ENCODE measurements at regions of chr7 and their contacts with region 1.

Region 1: DNA sequence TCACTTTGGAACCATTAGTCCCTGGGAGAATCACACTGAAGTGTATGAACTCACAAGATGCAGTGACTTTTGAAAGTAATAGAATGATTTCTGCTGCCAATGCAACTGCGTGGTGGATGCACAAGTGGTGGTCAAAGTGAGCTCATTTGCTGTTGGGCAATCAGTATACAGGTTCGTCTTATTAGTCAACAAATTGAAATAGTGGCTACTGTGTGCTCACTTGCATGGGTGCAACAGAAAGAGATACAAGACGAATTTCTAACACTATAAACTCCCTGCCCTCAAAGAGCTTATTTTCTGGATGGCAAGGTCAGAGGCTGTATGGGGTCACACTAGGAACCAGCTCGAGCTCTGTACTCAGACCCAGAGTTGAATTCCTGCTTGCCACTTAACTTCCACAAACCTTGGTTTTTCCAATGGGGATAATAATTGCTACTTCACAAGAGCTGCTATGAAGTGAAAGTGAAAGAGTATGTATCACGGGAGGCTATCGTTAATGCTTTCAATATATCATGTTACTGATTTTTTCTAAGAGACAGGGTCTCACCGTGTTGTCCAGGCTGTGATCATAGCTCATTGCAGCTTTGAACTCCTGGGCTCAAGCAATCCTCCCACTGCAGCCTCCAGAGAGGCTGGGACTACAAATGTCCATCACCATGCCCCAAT is 8.3 kb upstream of the BCL7B start:
- DNase-seq: no peak
- H3K4me3 ChIP-seq: no peak overlapping the region
- CTCF ChIP-seq: no peak

Region 2: DNA sequence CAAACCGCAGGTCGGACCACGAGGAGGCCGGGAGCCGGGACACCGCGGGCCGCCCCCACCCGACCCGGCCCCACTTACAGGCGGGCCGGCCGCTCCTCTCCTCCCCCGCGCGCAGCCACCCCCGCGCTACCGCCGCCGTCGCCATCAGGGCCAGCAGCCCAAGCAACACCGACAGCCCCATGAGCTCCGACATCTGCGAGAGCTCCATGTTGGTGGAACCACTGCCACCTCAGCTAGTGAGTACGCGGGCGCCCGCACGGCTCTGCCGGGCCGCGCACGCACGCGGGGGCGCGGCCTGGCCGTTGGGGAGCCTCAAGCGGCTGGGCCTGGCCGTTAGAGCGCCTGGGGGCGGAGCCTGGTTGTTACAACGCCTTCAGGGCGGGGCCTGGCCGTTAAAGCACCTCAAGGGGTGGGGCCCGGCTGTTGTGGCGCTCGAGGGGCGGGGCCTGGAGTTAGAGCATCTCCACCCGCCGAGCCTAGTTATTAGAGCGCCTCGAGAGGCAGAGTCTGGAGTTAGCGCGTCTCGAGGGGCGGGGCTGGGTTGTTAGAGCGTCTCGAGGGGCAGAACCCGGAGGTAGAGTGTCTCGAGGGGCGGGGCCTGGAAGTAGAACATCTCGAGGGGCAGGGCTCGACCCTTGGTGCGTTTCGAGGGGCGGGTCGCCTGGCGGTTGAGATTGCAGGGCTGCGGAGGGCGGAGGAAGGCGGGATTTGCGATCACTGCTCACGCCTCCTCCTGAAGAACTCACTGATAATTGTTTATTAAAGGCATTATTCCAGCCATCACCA is 12.7 kb after region 1 on chr7 and contains the start of gene TBL2:
- CTCF ChIA-PET with region 1: interaction called, 14 read pairs
- POLR2A ChIA-PET with region 1: interaction called, 9 read pairs
- DNase-seq: peak; percentile 77
- H3K4me3 ChIP-seq: peak within 1 kb of the TSS; percentile 91
- CTCF ChIP-seq: peak; percentile 30

Region 3: DNA sequence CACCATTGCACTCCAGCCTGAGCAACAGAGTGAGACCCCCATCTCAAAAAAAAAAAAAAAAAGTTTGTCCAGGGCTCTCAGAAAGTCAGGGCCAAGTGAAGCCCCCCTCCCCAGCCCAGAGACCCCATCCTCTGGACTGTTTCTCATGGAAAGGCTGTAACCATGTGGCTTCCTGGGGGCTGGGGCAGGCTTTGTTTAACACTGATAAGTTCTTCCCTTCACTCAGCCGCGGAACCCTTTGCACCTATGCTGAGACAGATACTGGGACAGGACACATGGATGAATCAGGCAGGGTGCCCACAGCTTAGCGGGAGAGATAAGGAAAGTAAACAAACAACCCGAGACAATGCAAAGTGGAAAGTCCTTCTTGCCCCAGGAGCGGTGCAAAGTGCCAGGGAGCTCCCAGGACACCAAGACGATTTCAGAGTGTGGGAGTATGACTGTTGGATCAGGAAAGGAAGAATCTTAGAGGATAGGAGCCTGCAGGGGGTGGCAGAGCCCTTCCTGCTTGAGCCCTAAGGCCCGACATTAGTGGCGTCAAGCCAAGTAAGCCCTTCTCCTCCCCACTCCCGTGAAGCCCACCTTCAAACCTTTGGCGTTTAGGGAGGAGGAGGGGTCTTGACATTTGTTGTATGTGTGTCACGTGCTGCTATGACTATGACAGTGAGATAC is 46.9 kb after region 1 on chr7:
- CTCF ChIA-PET with region 1: no interaction called
- POLR2A ChIA-PET with region 1: no interaction called
- DNase-seq: no peak
- H3K4me3 ChIP-seq: no peak overlapping the region
- CTCF ChIP-seq: no peak

Region 4: GRCh38 chr7:73718905-73719805 is 153.3 kb after region 1 on chr7 and contains the start of gene STX1A:
- CTCF ChIA-PET with region 1: no interaction called
- POLR2A ChIA-PET with region 1: no interaction called
- DNase-seq: no peak
- H3K4me3 ChIP-seq: peak within 1 kb of the TSS; percentile 75
- CTCF ChIP-seq: no peak

Region 5: GRCh38 chr7:73779517-73779916 is 213.7 kb after region 1 on chr7:
- CTCF ChIA-PET with region 1: no interaction called
- POLR2A ChIA-PET with region 1: no interaction called
- DNase-seq: no peak
- H3K4me3 ChIP-seq: no peak overlapping the region
- CTCF ChIP-seq: no peak